ENCODE measurements at regions of chr16 and their contacts with region 1.

Region 1: DNA sequence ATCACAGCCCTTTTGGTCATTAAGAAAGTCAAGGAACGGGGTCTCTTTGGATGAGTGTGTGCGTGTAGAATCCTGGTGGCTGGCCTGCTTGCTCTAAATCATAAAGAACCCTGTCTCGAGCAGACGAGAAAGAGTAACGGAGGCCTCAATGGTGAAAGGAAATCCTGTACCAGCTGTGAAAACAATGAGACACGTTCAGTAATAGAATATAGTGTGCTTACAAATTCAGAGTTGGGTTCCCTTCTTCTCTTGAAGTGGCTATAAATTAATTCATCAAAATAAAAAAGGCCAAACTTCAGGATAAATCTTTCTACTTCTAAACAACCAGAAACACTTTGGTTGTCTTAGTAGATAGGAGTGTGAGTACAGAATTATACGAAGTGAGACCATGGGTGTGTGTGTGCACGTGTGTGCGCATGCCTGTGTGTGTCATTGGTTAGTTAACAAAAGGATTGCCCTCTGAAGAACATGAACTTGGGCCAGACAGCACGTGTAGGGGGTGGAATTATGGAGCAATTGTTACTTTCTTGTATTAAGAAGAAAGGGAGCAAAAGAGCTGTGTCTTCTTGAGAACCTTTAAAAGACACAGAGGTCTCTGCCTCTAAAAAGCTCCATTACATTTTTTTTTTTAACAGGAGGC is 48.6 kb downstream of the WWOX start:
- DNase-seq: peak; percentile 93
- H3K4me3 ChIP-seq: no peak overlapping the region
- H3K27ac ChIP-seq: peak overlapping the region; percentile 70
- H3K4me1 ChIP-seq: peaks cover 17% of the 10 kb centered on the region
- H3K27me3 ChIP-seq: no peaks in the 10 kb centered on the region
- CTCF ChIP-seq: no peak
- POLR2A ChIP-seq: no peak

Region 2: GRCh38 chr16:78099372-78100161 is 48.4 kb before region 1 on chr16 and contains the start of gene WWOX:
- CTCF ChIA-PET with region 1: interaction called, 4 read pairs
- POLR2A ChIA-PET with region 1: no interaction called
- dilution Hi-C with region 1: no loop called
- intact Hi-C with region 1: loop called (anchors 1 kb)
- DNase-seq: peak; percentile 99
- H3K4me3 ChIP-seq: peak within 1 kb of the TSS; percentile 47 to 79 (median 54)
- H3K27ac ChIP-seq: peak within 1 kb of the TSS; percentile 55
- H3K4me1 ChIP-seq: peaks cover 9% of the 10 kb centered on the region
- H3K27me3 ChIP-seq: no peaks in the 10 kb centered on the region
- CTCF ChIP-seq: peak; percentile 87 to 96
- POLR2A ChIP-seq: no peak
- total RNA-seq, gene WWOX: 12.0 and 12.5 TPM in 2 replicates